AG04450 (cell line): ENCODE measurements at regions of chr7 and their contacts with region 1.

Region 1: DNA sequence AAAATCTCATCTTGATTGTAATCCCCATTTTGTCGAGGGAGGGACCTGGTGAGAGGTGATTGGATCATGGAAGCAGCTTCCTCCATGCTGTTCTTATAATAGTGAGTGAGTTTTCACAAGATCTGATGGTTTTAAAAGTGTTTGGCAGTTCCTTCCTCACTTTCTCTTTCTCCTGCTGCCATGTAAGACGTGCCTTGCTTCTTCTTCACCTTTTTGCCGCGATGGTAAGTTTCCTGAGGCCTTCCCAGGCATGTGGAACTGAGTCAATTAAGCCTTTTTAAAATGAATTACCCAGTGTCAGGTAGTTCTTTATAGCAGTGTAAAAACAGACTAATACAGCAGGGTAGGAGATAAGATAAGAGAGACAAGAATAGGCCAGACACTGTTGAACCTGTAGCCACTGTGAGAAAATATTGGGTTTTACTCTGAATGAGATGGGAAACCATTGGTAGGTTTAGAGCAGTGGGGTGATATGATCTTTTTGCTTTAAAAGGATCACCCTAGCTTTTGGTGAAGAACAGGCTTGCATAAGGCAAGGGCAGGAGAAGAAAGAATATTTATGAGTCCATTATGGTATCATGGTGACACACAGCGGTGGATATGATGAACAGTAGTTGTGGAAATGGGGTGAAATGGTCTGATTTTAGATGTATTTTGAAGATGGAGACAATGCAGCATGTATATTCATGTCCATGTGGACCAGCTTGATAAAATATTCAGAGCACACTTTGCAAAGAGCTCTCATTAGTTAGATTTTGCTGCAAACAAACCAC is 11.5 kb downstream of the OR6B1 start:
- DNase-seq: no peak
- H3K4me3 ChIP-seq: no peak overlapping the region
- H3K27ac ChIP-seq: no peak overlapping the region
- H3K27me3 ChIP-seq: peaks cover 2% of the 10 kb centered on the region
- CTCF ChIP-seq: peak; percentile 51

Region 2: DNA sequence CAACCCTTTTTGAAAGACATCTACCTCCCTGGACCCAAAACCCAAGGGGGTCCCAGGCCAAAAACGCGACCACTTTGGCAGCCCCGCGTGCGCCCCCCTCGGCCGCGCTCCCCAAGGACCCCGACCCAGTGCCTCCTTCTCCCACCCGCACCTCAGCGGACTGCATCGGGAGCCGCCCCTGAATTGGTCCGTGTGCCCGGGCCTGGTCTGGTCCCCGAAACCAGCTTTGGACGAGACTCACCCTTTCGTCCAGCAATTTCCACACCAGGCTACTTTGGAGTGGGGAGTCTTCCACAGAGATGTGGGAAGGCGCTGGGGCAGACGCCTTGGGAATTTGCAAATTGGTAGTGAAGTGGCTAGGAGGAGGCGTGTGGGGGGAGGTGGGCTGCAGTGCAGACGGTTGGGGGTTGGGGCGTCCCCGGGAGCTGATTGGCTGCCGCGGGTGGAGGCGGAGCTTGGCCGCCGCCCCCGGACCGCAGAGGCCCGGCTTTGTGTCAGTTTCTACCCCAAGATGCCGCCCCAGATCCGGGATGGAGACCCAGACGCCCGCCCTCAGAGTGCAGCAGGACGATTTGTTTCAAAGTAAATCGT is 126.6 kb before region 1 on chr7:
- CTCF ChIA-PET with region 1: interaction called, 22 read pairs
- POLR2A ChIA-PET with region 1: no interaction called
- DNase-seq: no peak
- H3K4me3 ChIP-seq: peak overlapping the region; percentile 89
- H3K27ac ChIP-seq: no peak overlapping the region
- H3K27me3 ChIP-seq: no peaks in the 10 kb centered on the region
- CTCF ChIP-seq: no peak